Lower leg skin (tissue), 4 donors: ENCODE measurements at regions of chr2 and their contacts with region 1.

Region 1: DNA sequence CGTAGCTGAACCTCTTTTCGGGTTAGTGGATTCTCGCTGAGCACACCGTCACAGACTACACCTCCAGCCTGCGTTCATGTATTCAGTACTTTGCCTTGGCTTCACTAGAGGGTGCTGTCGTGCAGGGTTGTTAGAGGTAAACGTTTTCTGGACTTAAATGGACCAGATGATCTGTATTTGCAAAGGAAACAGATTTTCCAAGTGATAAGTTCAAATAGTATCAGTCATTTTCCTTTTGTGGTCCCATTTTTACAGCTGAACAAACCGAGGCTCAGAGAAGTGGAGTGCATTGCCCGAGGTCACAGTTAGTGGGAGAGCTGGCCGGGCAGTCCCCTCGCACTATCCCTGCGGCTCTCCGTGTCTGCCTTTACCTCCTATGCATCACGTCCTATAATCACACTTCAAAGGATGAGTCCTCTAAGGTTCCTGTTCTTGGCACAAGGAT is 125.9 kb downstream of the MAP4K4 start:
- DNase-seq: peak in 1 of 2 donors; percentile 55
- H3K4me3 ChIP-seq: no peak overlapping the region
- CTCF ChIP-seq: no peak
- POLR2A ChIP-seq: no peak

Region 2: GRCh38 chr2:101420623-101421022 is 402.7 kb before region 1 on chr2:
- intact Hi-C with region 1: loop called (anchors 10 kb)
- DNase-seq: no peak
- H3K4me3 ChIP-seq: no peak overlapping the region
- CTCF ChIP-seq: no peak
- POLR2A ChIP-seq: no peak